ENCODE measurements at regions of chr13 and their contacts with region 1.

Region 1: DNA sequence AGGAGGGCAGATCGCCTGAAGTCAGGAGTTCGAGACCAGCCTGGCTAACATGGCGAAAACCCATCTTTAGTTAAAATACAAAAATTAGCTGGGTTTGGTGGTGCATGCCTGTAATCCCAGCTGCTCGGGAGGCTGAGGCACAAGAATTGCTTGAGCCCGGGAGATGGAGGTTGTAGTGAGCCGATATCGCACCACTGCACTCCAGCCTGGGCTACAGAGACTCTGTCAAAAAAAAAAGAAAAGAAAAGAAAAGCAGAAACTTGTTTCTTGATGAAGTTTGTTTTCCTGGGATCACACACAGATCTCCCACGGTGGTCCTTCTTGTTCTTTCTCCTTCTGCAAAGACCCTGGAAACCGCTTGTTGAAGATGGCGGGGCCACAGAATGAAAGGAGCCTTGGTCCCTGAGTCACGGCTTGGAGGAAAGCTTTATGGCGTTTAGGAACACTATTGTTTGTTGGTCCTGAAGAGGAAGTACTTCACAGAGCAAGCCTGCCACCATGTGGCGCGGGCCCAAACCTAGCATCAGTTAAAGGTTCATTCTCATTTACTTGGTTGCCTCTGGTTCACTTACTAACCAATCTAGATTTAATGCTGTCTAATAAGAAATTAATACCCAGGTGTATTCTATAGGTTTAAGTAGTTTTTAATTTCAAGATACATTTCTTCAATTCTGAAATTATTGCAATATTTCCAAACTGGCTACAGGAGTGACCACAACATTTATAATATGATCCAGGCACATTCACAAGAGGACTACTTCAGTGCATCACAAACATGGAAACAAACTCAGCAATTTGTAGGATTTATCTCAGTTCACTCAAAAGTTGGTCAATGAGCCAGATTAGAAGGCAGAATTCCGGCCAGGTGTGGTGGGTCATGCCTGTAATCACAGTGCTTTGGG is 21.3 kb upstream of the ARL11 start:
- DNase-seq: peak; percentile 90
- ATAC-seq: peak; percentile 98
- H3K4me3 Mint-ChIP-seq: peak overlapping the region; percentile 68
- H3K27ac Mint-ChIP-seq: peak overlapping the region; percentile 75
- H3K4me1 Mint-ChIP-seq: peaks cover 2% of the 10 kb centered on the region
- H3K27me3 Mint-ChIP-seq: no peaks in the 10 kb centered on the region

Region 2: DNA sequence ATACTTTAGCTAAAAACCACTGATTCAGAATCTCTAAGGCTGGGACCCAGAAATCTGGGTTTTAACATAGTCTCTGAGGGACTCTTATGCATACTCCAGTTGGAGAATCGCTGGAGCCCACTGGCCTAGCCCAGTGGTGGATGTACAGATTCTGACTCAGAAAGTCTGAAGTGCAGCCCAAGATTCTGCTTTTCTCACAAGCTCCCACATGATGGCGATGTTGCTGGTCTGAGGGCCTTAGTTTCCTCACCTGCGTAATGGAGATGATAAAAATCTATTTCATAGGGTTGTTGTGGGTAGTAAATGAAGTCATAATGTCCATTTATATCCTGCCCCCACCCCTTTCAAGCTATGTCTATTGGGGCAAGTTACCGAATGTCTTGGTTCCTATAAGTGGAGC is 367.0 kb before region 1 on chr13:
- CTCF ChIA-PET with region 1: interaction called, 4 read pairs
- POLR2A ChIA-PET with region 1: no interaction called
- intact Hi-C with region 1: loop called (anchors 1 kb)
- DNase-seq: peak; percentile 65
- ATAC-seq: peak; percentile 97
- H3K4me3 Mint-ChIP-seq: no peak overlapping the region
- H3K27ac Mint-ChIP-seq: no peak overlapping the region
- H3K4me1 Mint-ChIP-seq: no peaks in the 10 kb centered on the region
- H3K27me3 Mint-ChIP-seq: peaks cover 4% of the 10 kb centered on the region

Region 3: DNA sequence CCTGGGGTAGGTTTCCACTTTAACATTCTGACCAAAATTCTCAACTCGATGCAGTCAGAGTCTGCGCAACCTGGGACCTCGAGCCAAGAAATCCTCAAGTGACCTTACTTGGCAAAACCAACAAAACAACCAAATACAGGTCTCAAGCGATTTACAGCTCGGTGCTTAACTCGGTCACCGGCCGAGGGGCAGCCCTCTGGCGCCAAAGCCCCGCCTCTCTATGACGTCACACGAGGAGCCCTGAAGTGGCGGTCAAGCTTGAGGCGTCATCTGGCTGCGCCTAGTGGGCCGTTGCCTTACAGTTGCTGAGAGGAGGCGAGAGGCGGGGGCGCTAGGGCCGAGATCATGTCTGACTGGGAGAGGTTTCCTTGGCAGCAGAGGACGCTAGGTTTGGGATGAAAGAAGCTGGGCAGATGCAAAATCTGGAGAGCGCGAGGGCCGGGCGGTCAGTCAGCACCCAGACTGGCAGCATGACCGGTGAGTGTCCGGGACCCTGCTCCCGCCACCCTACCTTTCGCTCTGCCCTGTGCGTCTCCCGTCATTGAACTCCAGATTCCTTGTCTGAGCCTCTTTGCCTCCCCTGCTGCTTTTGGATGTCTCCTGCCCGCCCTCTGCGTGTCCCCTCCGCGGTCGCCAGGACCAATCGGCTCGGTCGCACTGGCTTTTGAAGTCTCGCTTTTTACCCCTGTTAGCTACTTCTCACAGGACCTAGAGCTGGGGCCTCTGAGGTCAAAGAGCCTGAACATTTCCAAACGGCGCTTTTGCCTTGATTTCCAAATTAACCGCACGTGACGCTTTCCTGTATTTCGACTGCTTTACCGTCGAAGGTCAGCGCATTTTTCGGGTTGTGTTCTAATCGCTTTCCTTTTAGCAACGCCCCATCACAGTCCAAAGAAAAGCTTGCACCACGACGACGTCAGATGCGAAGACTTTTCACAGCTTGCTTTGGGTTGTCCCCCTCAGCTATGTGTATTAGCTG is 359.1 kb before region 1 on chr13 and contains the start of gene CDADC1:
- CTCF ChIA-PET with region 1: no interaction called
- POLR2A ChIA-PET with region 1: no interaction called
- intact Hi-C with region 1: loop called in 1 of 2 experiments (anchors 2 kb)
- DNase-seq: peak; percentile 96
- ATAC-seq: peak; percentile 94
- H3K4me3 Mint-ChIP-seq: peak within 1 kb of the TSS; percentile 92
- H3K27ac Mint-ChIP-seq: peak within 1 kb of the TSS; percentile 96
- H3K4me1 Mint-ChIP-seq: peaks cover 34% of the 10 kb centered on the region
- H3K27me3 Mint-ChIP-seq: peaks cover 2% of the 10 kb centered on the region
- total RNA-seq, gene CDADC1: 8.5 to 9.7 TPM

Region 4: GRCh38 chr13:49300739-49301589 is 306.0 kb before region 1 on chr13:
- CTCF ChIA-PET with region 1: interaction called, 11 read pairs
- POLR2A ChIA-PET with region 1: no interaction called
- intact Hi-C with region 1: loop called (anchors 1 kb)
- DNase-seq: peak; percentile 79
- ATAC-seq: peak; percentile 98
- H3K4me3 Mint-ChIP-seq: peak overlapping the region; percentile 48
- H3K27ac Mint-ChIP-seq: peak overlapping the region; percentile 72
- H3K4me1 Mint-ChIP-seq: peaks cover 10% of the 10 kb centered on the region
- H3K27me3 Mint-ChIP-seq: no peaks in the 10 kb centered on the region

Region 5: DNA sequence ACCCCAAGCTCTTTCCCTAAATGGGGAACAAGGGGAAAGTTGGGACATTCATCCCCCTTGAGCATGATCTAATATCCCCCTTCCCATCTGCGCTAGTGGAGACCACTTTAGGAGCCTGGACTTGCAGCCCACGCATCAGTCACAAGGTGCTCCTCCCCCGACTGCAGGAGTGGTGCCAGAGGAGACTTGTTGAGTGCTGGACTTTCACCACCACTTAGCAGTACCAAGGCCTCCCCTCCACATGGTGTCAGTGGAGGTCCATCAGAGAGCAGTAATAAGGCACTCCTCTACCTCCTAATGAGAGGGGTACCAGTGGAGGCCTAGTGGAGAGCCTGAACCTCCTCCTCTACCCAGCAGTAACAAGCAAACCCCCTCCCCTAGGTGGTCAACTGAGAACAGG is 185.6 kb before region 1 on chr13:
- CTCF ChIA-PET with region 1: interaction called, 4 read pairs
- POLR2A ChIA-PET with region 1: no interaction called
- intact Hi-C with region 1: loop called (anchors 1 kb)
- DNase-seq: peak; percentile 46
- ATAC-seq: peak; percentile 64
- H3K4me3 Mint-ChIP-seq: no peak overlapping the region
- H3K27ac Mint-ChIP-seq: no peak overlapping the region
- H3K4me1 Mint-ChIP-seq: no peaks in the 10 kb centered on the region
- H3K27me3 Mint-ChIP-seq: no peaks in the 10 kb centered on the region

Region 6: DNA sequence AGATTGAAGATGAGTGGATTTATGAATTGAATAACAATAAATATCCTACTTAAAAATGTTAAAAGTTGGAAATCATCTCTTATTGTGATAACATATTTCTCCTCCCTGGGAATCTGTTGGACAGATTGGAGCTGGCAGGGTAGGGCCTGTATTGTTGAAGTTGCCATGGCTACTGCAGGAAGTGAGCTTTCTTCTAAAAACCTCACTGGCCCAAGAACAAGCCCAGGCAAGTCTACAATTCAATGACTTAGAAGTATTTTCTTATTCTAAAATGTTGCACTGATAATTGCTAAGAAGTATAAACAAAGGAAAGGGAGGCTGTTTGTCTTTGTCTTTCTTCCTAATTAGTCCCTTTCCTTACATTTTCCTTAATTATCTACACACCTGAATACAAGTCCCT is 1124.4 kb after region 1 on chr13:
- CTCF ChIA-PET with region 1: no interaction called
- POLR2A ChIA-PET with region 1: no interaction called
- intact Hi-C with region 1: no loop called
- DNase-seq: no peak
- ATAC-seq: no peak
- H3K4me3 Mint-ChIP-seq: no peak overlapping the region
- H3K27ac Mint-ChIP-seq: no peak overlapping the region
- H3K4me1 Mint-ChIP-seq: peaks cover 3% of the 10 kb centered on the region
- H3K27me3 Mint-ChIP-seq: peaks cover 2% of the 10 kb centered on the region